Gastrocnemius medialis (tissue), 4 donors: ENCODE measurements at regions of chr5 and their contacts with region 1.

Region 1: GRCh38 chr5:76601470-76601869 is 21.7 kb downstream of the F2RL2 start:
- DNase-seq: no peak
- ATAC-seq: no peak
- H3K4me3 ChIP-seq: no peak overlapping the region
- H3K27ac ChIP-seq: no peak overlapping the region
- H3K4me1 ChIP-seq: no peaks in the 10 kb centered on the region
- H3K27me3 ChIP-seq: no peaks in the 10 kb centered on the region
- CTCF ChIP-seq: peak in 4 of 5 experiments; percentile 44 to 53 (median 48)
- POLR2A ChIP-seq: no peak

Region 2: DNA sequence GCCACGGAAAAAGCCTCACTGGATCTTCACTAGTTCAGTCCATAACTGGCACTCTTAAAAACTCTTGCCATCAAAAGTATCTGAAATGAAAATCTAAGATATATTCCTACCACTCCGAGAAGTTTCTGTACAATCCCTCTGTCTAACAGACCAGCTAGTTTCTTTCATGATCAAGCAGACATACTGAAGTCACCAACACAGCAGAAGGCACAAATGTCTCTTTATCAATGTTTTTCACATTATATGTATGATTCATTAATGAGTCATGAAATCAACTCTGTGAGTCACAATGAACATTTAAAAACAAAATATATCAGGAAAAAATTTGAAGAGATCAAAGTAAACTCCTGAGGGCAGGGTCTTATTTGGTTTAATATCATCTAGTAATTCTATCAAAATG is 165.3 kb after region 1 on chr5:
- in situ Hi-C with region 1: loop called in 2 of 4 experiments (anchors 10 kb)
- intact Hi-C with region 1: loop called (anchors 5 kb)
- DNase-seq: no peak
- ATAC-seq: no peak
- H3K4me3 ChIP-seq: no peak overlapping the region
- H3K27ac ChIP-seq: no peak overlapping the region
- H3K4me1 ChIP-seq: no peaks in the 10 kb centered on the region
- H3K27me3 ChIP-seq: no peaks in the 10 kb centered on the region
- CTCF ChIP-seq: no peak
- POLR2A ChIP-seq: no peak

Region 3: GRCh38 chr5:76771705-76772405 is 170.4 kb after region 1 on chr5:
- in situ Hi-C with region 1: loop called in 3 of 4 experiments (anchors 5 to 10 kb)
- intact Hi-C with region 1: loop called (anchors 5 kb)
- DNase-seq: no peak
- ATAC-seq: no peak
- H3K4me3 ChIP-seq: no peak overlapping the region
- H3K27ac ChIP-seq: no peak overlapping the region
- H3K4me1 ChIP-seq: no peaks in the 10 kb centered on the region
- H3K27me3 ChIP-seq: no peaks in the 10 kb centered on the region
- CTCF ChIP-seq: no peak
- POLR2A ChIP-seq: no peak

Region 4: GRCh38 chr5:77015938-77016569 is 414.6 kb after region 1 on chr5:
- in situ Hi-C with region 1: loop called in 1 of 4 experiments (anchors 25 kb)
- intact Hi-C with region 1: no loop called
- DNase-seq: no peak
- ATAC-seq: no peak
- H3K4me3 ChIP-seq: no peak overlapping the region
- H3K27ac ChIP-seq: no peak overlapping the region
- H3K4me1 ChIP-seq: no peaks in the 10 kb centered on the region
- H3K27me3 ChIP-seq: peaks cover 0 to 2% (median 0%) of the 10 kb centered on the region in 3 donors
- CTCF ChIP-seq: no peak
- POLR2A ChIP-seq: no peak